ENCODE measurements at regions of chr11 and their contacts with region 1.

Region 1: DNA sequence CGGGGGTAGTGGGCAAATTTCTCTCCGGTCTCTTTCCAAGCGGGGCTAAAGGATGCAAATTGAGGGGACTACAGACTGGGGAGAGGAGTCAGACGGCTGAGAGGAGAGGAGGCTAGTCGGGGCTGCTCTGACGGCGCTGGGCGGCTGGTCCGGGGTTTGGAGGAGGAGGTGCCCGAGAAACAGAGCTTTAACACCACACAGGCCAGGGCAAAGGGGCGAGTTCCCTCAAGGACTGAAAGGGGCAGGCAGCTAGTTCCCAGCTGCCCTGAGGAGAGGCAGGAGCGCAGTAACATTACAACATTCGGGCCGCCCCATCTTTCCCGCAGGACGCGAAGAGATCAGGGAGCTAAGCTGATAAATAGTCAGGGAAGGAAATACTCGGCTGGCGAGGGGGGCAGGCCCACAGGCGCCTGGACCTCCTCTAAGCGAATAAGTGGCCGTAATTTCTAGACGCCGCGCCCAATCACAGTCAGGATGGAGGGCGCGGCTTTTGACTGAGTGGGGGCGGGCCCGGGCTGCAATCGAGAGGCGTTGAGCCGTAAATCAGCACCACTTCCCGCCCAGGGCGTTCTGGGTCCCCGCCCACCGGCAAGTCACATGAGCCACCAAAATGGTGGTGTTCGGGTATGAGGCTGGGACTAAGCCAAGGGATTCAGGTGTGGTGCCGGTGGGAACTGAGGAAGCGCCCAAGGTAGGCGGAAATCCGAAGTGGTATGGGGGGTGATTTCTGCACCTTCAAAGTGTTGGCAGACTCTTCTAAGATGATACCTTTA is at the start of gene TMEM126B:
- DNase-seq: peak; percentile 99
- ATAC-seq: peak; percentile 97
- H3K4me3 Mint-ChIP-seq: peak within 1 kb of the TSS; percentile 93
- H3K27ac Mint-ChIP-seq: peak within 1 kb of the TSS; percentile 97
- H3K4me1 Mint-ChIP-seq: peaks cover 36% of the 10 kb centered on the region
- H3K27me3 Mint-ChIP-seq: no peaks in the 10 kb centered on the region
- CTCF ChIP-seq: no peak
- total RNA-seq, gene TMEM126B: 51.6 to 61.2 TPM

Region 2: DNA sequence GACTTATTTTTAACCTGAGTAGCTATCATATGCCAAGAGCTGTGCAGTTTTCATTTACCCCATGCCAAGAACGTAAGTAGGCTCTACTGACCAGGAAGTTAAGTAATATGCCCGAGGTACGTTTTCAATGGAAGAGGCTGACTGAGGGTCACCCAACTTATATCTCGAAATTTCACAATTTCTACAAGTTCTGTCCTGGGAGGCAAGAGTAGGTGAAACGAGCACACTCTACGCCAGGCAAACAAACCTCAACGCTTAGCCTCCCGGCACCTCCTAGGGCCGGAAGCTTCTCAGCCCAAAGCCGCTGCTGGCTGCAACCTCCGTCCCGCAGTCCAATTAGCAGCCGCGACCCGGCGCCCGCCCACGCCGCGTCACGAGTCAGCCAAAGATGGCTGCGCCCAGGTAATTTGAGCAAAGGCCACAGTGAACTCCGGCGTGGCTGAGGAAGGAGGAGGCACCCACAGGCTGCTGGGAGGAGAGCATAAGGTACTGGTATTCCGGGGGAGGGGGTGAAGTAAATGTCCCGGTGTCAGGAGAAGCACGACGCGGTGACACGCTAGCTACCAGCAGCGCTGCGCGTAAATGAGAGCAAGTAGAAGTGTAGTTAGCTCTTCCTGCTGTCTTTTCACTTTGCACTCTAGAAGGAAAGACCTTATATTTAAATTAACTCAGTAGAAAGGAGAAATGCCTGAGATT is 19.6 kb after region 1 on chr11 and contains the start of gene TMEM126A:
- CTCF ChIA-PET with region 1: interaction called, 8 read pairs
- POLR2A ChIA-PET with region 1: interaction called, 33 read pairs
- intact Hi-C with region 1: no loop called
- DNase-seq: peak; percentile 96
- ATAC-seq: peak; percentile 96
- H3K4me3 Mint-ChIP-seq: peak within 1 kb of the TSS; percentile 90
- H3K27ac Mint-ChIP-seq: peak within 1 kb of the TSS; percentile 95
- H3K4me1 Mint-ChIP-seq: peaks cover 37% of the 10 kb centered on the region
- H3K27me3 Mint-ChIP-seq: peaks cover 8% of the 10 kb centered on the region
- CTCF ChIP-seq: no peak
- total RNA-seq, gene TMEM126A: 47.3 to 48.9 TPM

Region 3: GRCh38 chr11:85652786-85653447 is 24.7 kb after region 1 on chr11:
- CTCF ChIA-PET with region 1: interaction called, 8 read pairs
- POLR2A ChIA-PET with region 1: interaction called, 33 read pairs
- intact Hi-C with region 1: no loop called
- DNase-seq: no peak
- ATAC-seq: peak; percentile 45
- H3K4me3 Mint-ChIP-seq: no peak overlapping the region
- H3K27ac Mint-ChIP-seq: peak overlapping the region; percentile 80
- H3K4me1 Mint-ChIP-seq: peaks cover 58% of the 10 kb centered on the region
- H3K27me3 Mint-ChIP-seq: no peaks in the 10 kb centered on the region
- CTCF ChIP-seq: no peak